ENCODE measurements at regions of chr4 and their contacts with region 1.

Region 1: DNA sequence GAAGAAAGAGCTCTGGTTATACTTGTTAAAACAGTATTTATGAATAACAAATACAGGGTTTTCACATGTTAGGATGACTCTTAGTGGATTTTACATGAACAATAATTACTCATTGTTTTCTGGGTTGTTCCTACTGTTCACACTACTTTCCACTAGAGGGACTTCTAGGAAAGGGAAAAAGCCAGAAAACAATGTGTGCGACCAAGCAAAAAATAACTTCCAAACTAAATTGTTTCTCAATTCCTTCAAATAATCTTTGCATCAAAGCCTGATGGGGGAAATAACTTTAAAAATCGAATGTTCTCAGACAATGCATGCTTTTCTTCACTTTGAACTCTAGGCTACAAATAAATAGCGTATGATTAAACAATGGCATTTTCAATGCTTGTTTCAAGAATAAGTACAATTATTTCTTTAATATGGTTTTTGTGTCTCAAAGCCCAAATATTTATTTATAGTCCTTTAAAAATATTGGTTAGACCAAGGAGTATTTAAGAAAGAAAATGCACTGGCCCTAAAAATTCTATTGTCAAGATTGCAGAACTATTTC is 72.1 kb upstream of the ETNPPL start:
- DNase-seq: no peak

Region 2: GRCh38 chr4:108592674-108592986 is 242.3 kb before region 1 on chr4:
- intact Hi-C with region 1: no loop called
- DNase-seq: no peak

Region 3: DNA sequence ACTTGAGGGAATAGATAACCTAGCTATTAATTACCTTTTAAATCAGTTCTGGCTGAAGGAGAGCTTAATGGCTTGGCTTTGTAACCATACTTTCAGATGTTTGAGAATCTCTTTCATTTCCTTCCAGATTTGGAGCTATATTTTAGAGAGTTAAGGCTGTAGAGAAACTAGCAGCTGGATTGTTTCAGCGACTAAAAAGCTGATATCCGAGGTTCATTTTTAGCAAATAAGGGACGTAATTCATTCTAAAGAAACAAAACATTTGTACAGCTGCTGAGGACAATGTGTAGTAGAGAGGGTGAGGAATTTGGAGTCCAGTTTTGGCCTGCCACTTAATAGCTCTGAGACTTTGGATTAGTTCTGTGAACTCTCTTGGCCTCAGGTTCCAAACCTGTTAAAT is 172.3 kb before region 1 on chr4:
- intact Hi-C with region 1: no loop called
- DNase-seq: no peak

Region 4: GRCh38 chr4:108774809-108775530 is 59.9 kb before region 1 on chr4:
- intact Hi-C with region 1: loop called (anchors 1 kb)
- DNase-seq: peak; percentile 82

Region 5: DNA sequence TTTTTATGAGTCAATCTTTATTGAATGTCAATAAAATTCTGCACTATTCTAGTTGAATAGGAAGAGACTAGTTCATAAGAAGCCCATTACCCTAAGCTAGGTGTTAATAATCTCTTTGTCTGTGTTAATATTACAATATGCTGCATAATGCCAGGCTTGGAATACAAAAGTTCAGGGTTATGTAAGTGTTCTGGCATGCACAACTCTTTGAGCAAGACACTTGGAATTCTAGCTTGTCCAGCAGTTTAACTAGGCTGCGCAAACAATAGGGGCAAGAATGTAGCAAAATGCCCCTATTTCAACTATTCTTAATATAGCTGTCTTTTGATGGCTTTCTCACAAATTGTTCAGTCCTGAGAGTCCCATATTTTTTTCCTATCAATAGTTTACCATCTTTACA is 40.8 kb before region 1 on chr4:
- intact Hi-C with region 1: no loop called
- DNase-seq: no peak

Region 6: GRCh38 chr4:108972613-108973283 is 137.8 kb after region 1 on chr4:
- intact Hi-C with region 1: no loop called
- DNase-seq: no peak

Region 7: GRCh38 chr4:109294006-109294405 is 459.1 kb after region 1 on chr4:
- intact Hi-C with region 1: loop called (anchors 10 kb)
- DNase-seq: no peak

Region 8: GRCh38 chr4:109406338-109406931 is 571.5 kb after region 1 on chr4:
- intact Hi-C with region 1: loop called (anchors 2 kb)
- DNase-seq: no peak